Sciatic nerve (tissue), 2 donors: ENCODE measurements at regions of chr19 and their contacts with region 1.

Region 1: DNA sequence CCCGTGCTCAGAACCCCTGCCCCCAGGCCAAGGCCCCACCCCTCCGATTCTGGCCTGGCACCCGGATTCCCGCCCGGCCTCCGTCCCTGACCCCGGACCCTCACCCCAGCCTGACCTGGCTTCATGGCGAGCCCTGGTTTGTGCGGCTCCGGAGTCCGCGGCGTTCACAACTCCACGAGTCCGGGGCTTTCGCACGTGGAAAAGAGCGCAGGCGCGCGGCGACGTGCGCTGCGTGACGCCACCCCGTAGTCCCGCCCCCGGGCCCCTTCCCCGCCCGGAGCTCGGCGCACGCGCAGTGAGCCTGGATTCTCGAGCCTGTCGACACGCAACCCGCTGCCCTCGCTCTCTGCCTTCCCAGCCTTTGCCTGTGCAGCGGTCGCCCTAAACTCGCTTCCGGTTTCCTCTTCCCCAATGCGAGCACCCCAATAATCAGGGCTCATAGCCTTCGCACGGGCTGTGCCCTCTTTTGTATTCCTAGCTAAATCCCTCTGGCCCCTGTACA is at the start of gene FBL:
- DNase-seq: peak; percentile 99
- ATAC-seq: peak; percentile 98
- total RNA-seq, gene FBL: 132 TPM

Region 2: GRCh38 chr19:39765091-39766076 is 80.8 kb before region 1 on chr19:
- intact Hi-C with region 1: loop called (anchors 10 kb)
- DNase-seq: no peak
- ATAC-seq: no peak